ENCODE measurements at regions of chr4 and their contacts with region 1.

Region 1: DNA sequence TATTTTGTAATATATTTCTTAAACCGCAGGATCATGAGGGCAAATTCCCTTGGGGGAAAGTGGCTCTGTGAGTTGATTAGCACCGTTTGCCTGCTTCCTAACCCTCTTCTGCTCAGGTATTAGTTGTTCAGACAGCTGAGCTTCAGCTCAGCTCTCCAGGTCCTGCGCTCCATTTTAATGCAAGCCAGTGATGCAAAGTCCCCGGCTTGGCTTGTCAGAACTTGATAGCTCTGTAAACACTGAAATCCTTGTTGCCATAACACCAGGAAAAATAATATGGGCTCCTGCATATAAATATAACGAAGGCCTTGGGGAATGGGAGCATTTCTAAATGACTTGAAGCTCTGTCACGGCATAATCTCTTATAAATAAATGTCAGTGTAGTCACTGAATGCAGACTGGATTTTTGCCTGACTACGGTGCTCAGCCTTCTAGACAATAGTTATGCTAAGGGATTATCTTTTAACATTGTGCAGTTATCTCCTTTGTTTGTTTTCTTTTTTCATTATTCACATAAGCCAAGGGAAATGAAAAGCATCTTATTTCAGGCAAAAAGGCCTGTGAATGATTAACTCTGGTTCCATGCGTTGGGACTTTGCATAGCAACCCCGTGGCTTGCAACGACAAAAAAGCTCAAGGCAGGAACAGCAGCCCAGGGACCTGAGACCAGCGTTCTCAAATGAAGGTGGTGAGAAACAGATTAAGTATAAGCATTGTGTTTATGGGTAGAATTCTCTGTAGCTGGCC is 253.2 kb downstream of the SPRY1 start:
- DNase-seq: peak; percentile 70 to 78
- H3K4me3 ChIP-seq: peak overlapping the region; percentile 18
- H3K4me3 Mint-ChIP-seq: peak overlapping the region; percentile 69
- H3K27ac Mint-ChIP-seq: peak overlapping the region; percentile 96
- H3K4me1 ChIP-seq: peaks cover 18% of the 10 kb centered on the region
- H3K4me1 Mint-ChIP-seq: peaks cover 7% of the 10 kb centered on the region
- H3K27me3 ChIP-seq: no peaks in the 10 kb centered on the region
- H3K27me3 Mint-ChIP-seq: no peaks in the 10 kb centered on the region
- CTCF ChIP-seq: no peak

Region 2: GRCh38 chr4:123564758-123565346 is 85.0 kb before region 1 on chr4:
- CTCF ChIA-PET with region 1: interaction called, 13 read pairs
- POLR2A ChIA-PET with region 1: no interaction called
- intact Hi-C with region 1: no loop called
- DNase-seq: peak; percentile 80 to 81
- H3K4me3 ChIP-seq: no peak overlapping the region
- H3K4me3 Mint-ChIP-seq: no peak overlapping the region
- H3K27ac Mint-ChIP-seq: no peak overlapping the region
- H3K4me1 ChIP-seq: peaks cover 20% of the 10 kb centered on the region
- H3K4me1 Mint-ChIP-seq: peaks cover 22% of the 10 kb centered on the region
- H3K27me3 ChIP-seq: no peaks in the 10 kb centered on the region
- H3K27me3 Mint-ChIP-seq: no peaks in the 10 kb centered on the region
- CTCF ChIP-seq: peak; percentile 88 to 99

Region 3: GRCh38 chr4:123588631-123589241 is 61.1 kb before region 1 on chr4:
- CTCF ChIA-PET with region 1: no interaction called
- POLR2A ChIA-PET with region 1: no interaction called
- intact Hi-C with region 1: no loop called
- DNase-seq: no peak
- H3K4me3 ChIP-seq: no peak overlapping the region
- H3K4me3 Mint-ChIP-seq: peak overlapping the region; percentile 32
- H3K27ac Mint-ChIP-seq: no peak overlapping the region
- H3K4me1 ChIP-seq: peaks cover 19% of the 10 kb centered on the region
- H3K4me1 Mint-ChIP-seq: peaks cover 6% of the 10 kb centered on the region
- H3K27me3 ChIP-seq: no peaks in the 10 kb centered on the region
- H3K27me3 Mint-ChIP-seq: no peaks in the 10 kb centered on the region
- CTCF ChIP-seq: no peak

Region 4: DNA sequence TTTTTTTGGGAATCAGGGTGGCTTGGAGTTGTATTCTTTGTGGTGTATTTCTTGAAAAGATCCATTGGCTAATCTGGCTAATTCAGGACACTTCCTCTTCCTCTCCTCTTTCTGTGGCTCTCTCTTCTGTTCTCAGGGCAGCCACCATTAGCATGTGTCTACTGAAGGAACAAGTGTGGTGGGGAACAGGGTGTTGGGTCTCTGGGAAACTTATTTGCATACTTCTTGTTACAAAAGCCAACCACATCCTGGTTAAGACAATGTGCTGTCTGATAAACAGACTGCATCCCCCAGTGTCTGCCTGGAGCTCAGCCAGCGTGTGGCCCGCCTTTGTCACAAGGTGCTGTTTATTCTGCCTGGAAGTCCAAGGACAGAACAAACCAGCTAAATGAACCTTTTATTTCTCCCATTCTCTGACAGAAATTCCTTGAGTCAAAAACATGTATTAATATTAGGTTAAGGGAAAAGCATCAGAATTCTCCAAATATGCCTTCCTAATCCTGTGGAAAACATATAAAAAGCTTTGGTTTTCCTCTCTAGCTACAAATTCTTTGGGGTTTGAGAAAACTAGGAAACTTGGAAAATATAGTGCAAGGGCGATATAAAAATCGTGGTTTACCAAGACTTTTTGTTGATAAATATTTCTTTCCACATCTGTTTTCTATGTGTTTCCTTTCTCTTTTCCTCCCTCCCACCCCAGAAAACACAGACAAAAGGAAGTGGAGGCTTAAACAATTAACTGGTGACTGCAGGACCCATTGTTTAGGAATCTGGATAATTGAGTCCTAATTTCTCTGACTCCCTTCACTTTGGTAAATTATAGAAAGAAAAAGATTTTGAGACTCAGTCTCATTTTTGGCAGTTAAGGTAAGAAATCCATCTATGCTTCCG is 49.7 kb before region 1 on chr4:
- CTCF ChIA-PET with region 1: no interaction called
- POLR2A ChIA-PET with region 1: no interaction called
- intact Hi-C with region 1: loop called (anchors 2 kb)
- DNase-seq: no peak
- H3K4me3 ChIP-seq: no peak overlapping the region
- H3K4me3 Mint-ChIP-seq: no peak overlapping the region
- H3K27ac Mint-ChIP-seq: no peak overlapping the region
- H3K4me1 ChIP-seq: peaks cover 16% of the 10 kb centered on the region
- H3K4me1 Mint-ChIP-seq: peaks cover 7% of the 10 kb centered on the region
- H3K27me3 ChIP-seq: no peaks in the 10 kb centered on the region
- H3K27me3 Mint-ChIP-seq: no peaks in the 10 kb centered on the region
- CTCF ChIP-seq: no peak

Region 5: DNA sequence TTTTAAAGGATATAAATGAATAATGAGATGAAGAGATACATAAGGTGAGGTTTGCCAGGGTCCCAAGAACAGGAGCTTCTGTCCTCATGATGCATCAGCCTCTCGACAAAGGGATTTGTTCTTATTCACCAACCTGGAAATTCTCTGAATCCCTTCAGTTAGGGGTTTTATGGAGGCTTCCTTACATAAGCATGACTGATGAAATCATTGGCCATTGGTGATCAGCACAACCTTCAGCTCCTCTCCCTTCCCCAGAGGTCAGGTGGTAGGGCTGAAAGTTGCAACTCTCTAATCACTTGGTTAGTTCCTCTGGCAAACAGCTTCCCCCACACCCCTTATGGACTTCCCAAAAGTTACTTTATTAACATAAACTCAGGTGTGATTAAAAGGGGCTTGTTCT is 31.2 kb before region 1 on chr4:
- CTCF ChIA-PET with region 1: no interaction called
- POLR2A ChIA-PET with region 1: no interaction called
- intact Hi-C with region 1: loop called (anchors 2 kb)
- DNase-seq: peak in 1 of 2 experiments; percentile 5
- H3K4me3 ChIP-seq: no peak overlapping the region
- H3K4me3 Mint-ChIP-seq: no peak overlapping the region
- H3K27ac Mint-ChIP-seq: no peak overlapping the region
- H3K4me1 ChIP-seq: peaks cover 14% of the 10 kb centered on the region
- H3K4me1 Mint-ChIP-seq: peaks cover 14% of the 10 kb centered on the region
- H3K27me3 ChIP-seq: no peaks in the 10 kb centered on the region
- H3K27me3 Mint-ChIP-seq: no peaks in the 10 kb centered on the region
- CTCF ChIP-seq: no peak

Region 6: GRCh38 chr4:123631786-123632692 is 17.8 kb before region 1 on chr4:
- CTCF ChIA-PET with region 1: no interaction called
- POLR2A ChIA-PET with region 1: no interaction called
- intact Hi-C with region 1: no loop called
- DNase-seq: no peak
- H3K4me3 ChIP-seq: no peak overlapping the region
- H3K4me3 Mint-ChIP-seq: no peak overlapping the region
- H3K27ac Mint-ChIP-seq: no peak overlapping the region
- H3K4me1 ChIP-seq: no peaks in the 10 kb centered on the region
- H3K4me1 Mint-ChIP-seq: no peaks in the 10 kb centered on the region
- H3K27me3 ChIP-seq: no peaks in the 10 kb centered on the region
- H3K27me3 Mint-ChIP-seq: no peaks in the 10 kb centered on the region
- CTCF ChIP-seq: no peak

Region 7: GRCh38 chr4:123744664-123745290 is 95.0 kb after region 1 on chr4:
- CTCF ChIA-PET with region 1: no interaction called
- POLR2A ChIA-PET with region 1: no interaction called
- intact Hi-C with region 1: no loop called
- DNase-seq: peak in 1 of 2 experiments; percentile 20
- H3K4me3 ChIP-seq: no peak overlapping the region
- H3K4me3 Mint-ChIP-seq: no peak overlapping the region
- H3K27ac Mint-ChIP-seq: no peak overlapping the region
- H3K4me1 ChIP-seq: peaks cover 5% of the 10 kb centered on the region
- H3K4me1 Mint-ChIP-seq: peaks cover 7% of the 10 kb centered on the region
- H3K27me3 ChIP-seq: no peaks in the 10 kb centered on the region
- H3K27me3 Mint-ChIP-seq: no peaks in the 10 kb centered on the region
- CTCF ChIP-seq: no peak

Measured in Caco-2 (cell line).